Lower leg skin (tissue), 4 donors: ENCODE measurements at regions of chr1 and their contacts with region 1.

Region 1: DNA sequence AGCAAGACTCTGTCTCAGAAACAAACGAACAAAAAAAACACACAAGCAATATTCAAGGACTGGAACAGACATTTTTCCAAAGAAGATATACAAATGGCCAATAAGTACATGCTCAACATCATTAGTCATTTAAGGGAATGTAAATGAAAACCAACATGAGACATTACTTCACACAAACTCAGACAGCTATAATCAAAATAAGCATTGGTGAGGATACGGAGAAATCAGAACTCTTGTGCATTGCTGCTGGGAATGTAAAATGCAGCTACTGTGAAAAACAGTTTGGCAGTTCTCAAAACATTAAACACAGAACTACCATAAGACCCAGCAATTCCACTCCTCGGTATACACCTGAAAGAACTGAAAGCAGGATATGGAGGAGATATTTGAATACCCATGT is 15.4 kb downstream of the NOL9 start:
- DNase-seq: no peak
- H3K4me3 ChIP-seq: no peak overlapping the region
- CTCF ChIP-seq: no peak
- POLR2A ChIP-seq: no peak

Region 2: GRCh38 chr1:6464514-6464836 is 74.5 kb before region 1 on chr1:
- intact Hi-C with region 1: no loop called
- DNase-seq: no peak
- H3K4me3 ChIP-seq: no peak overlapping the region
- CTCF ChIP-seq: no peak
- POLR2A ChIP-seq: no peak

Region 3: GRCh38 chr1:6653436-6654290 is 114.7 kb after region 1 on chr1:
- intact Hi-C with region 1: loop called (anchors 10 kb)
- DNase-seq: no peak
- H3K4me3 ChIP-seq: no peak overlapping the region
- CTCF ChIP-seq: no peak
- POLR2A ChIP-seq: no peak